Gastrocnemius medialis (tissue), 4 donors: ENCODE measurements at regions of chr1 and their contacts with region 1.

Region 1: GRCh38 chr1:33455539-33456501 is 16.6 kb upstream of the ZSCAN20 start:
- DNase-seq: peak; percentile 90 to 96
- ATAC-seq: peak; percentile 86 to 90
- H3K4me3 ChIP-seq: no peak overlapping the region
- H3K27ac ChIP-seq: peak overlapping the region; percentile 78 to 84 (median 80)
- H3K4me1 ChIP-seq: peaks cover 32 to 43% of the 10 kb centered on the region in 2 donors
- H3K27me3 ChIP-seq: no peaks in the 10 kb centered on the region
- CTCF ChIP-seq: peak; percentile 54 to 73 (median 68)
- POLR2A ChIP-seq: no peak

Region 2: GRCh38 chr1:33378976-33379375 is 76.8 kb before region 1 on chr1:
- in situ Hi-C with region 1: loop called in 3 of 4 experiments (anchors 5 to 25 kb)
- intact Hi-C with region 1: no loop called
- DNase-seq: no peak
- ATAC-seq: no peak
- H3K4me3 ChIP-seq: no peak overlapping the region
- H3K27ac ChIP-seq: no peak overlapping the region
- H3K4me1 ChIP-seq: peaks cover 37 to 41% of the 10 kb centered on the region in 2 donors
- H3K27me3 ChIP-seq: no peaks in the 10 kb centered on the region
- CTCF ChIP-seq: no peak
- POLR2A ChIP-seq: no peak